ENCODE measurements at regions of chr21 and their contacts with region 1.

Region 1: GRCh38 chr21:33229784-33230544 is at the start of gene IFNAR2:
- DNase-seq: peak; percentile 75
- H3K4me3 ChIP-seq: peak within 1 kb of the TSS; percentile 86
- H3K27ac ChIP-seq: peak within 1 kb of the TSS; percentile 76
- H3K4me1 ChIP-seq: peaks cover 46% of the 10 kb centered on the region
- CTCF ChIP-seq: no peak
- total RNA-seq, gene IFNAR2: 22.1 and 24.8 TPM in 2 replicates

Region 2: GRCh38 chr21:32520875-32521735 is 708.9 kb before region 1 on chr21:
- CTCF ChIA-PET with region 1: no interaction called
- POLR2A ChIA-PET with region 1: no interaction called
- intact Hi-C with region 1: no loop called
- DNase-seq: no peak
- H3K4me3 ChIP-seq: no peak overlapping the region
- H3K27ac ChIP-seq: no peak overlapping the region
- H3K4me1 ChIP-seq: no peaks in the 10 kb centered on the region
- CTCF ChIP-seq: no peak

Region 3: GRCh38 chr21:33205476-33205875 is 24.5 kb before region 1 on chr21:
- CTCF ChIA-PET with region 1: no interaction called
- POLR2A ChIA-PET with region 1: no interaction called
- intact Hi-C with region 1: loop called (anchors 2 kb)
- DNase-seq: peak; percentile 74
- H3K4me3 ChIP-seq: peak overlapping the region; percentile 56
- H3K27ac ChIP-seq: peak overlapping the region; percentile 88
- H3K4me1 ChIP-seq: peaks cover 68% of the 10 kb centered on the region
- CTCF ChIP-seq: peak; percentile 61

Region 4: DNA sequence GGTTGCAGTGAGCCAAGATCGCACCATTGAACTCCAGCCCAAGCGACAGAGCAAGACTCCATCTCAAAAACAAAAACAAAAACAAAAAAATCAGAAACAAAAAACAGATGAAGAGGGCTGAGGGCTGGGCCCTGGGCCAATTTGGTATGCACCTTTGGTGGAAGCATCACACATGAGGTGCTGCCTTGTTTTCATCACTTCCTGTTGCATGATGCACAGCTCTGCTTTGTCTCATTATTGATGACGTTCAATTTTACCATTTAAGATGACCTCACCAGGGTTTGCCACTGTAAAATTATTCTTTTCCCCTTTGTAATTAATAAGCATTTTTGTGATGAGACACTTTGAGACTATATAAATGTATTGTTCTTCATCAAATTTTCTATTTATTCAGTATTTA is 10.0 kb before region 1 on chr21:
- CTCF ChIA-PET with region 1: no interaction called
- POLR2A ChIA-PET with region 1: interaction called, 11 read pairs
- intact Hi-C with region 1: no loop called
- DNase-seq: no peak
- H3K4me3 ChIP-seq: no peak overlapping the region
- H3K27ac ChIP-seq: no peak overlapping the region
- H3K4me1 ChIP-seq: peaks cover 44% of the 10 kb centered on the region
- CTCF ChIP-seq: no peak

Region 5: GRCh38 chr21:33434770-33435360 is 204.9 kb after region 1 on chr21:
- CTCF ChIA-PET with region 1: no interaction called
- POLR2A ChIA-PET with region 1: no interaction called
- intact Hi-C with region 1: no loop called
- DNase-seq: peak; percentile 60
- H3K4me3 ChIP-seq: no peak overlapping the region
- H3K27ac ChIP-seq: peak overlapping the region; percentile 42
- H3K4me1 ChIP-seq: peaks cover 31% of the 10 kb centered on the region
- CTCF ChIP-seq: no peak